BJ (cell line): ENCODE measurements at regions of chr16 and their contacts with region 1.

Region 1: GRCh38 chr16:84726079-84726668 is 26.4 kb downstream of the USP10 start:
- DNase-seq: no peak
- H3K4me3 ChIP-seq: no peak overlapping the region
- H3K27me3 ChIP-seq: no peaks in the 10 kb centered on the region
- CTCF ChIP-seq: peak; percentile 92

Region 2: GRCh38 chr16:84511180-84511824 is 214.9 kb before region 1 on chr16:
- CTCF ChIA-PET with region 1: interaction called, 16 read pairs
- POLR2A ChIA-PET with region 1: no interaction called
- DNase-seq: peak; percentile 46
- H3K4me3 ChIP-seq: no peak overlapping the region
- H3K27me3 ChIP-seq: no peaks in the 10 kb centered on the region
- CTCF ChIP-seq: peak; percentile 89

Region 3: DNA sequence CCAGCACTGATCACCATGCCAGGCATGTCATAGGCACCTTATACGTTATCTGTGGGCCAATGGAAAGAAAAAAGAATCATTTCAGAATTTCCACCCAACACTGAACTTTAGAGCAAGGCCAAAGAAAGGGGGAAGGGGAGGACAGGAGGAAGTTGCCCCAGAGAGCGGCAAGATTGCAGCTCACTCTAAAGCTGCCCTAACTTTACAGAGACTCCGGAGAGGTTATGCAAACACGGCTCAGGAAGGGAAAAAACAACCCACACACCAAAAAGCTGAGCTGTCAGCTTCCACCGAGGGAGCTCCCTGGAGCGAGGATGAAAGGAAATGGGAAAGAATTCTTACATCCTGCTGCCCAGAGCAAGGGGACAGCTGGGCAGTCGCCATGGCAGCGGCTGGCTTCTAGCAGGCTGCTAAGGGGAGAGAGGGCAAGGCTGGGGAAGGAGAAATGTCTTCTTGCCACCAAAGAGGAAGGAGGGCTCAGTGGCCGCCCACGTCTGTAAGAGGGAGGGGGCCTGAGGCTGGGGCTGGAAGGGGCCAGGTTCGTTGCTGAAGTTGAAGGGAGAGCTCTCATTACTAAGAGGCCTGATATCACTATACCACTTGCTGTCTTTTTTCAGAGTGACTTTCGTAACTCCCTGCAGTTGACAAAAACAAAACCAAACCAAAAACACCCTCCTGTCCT is 126.5 kb before region 1 on chr16:
- CTCF ChIA-PET with region 1: no interaction called
- POLR2A ChIA-PET with region 1: no interaction called
- DNase-seq: no peak
- H3K4me3 ChIP-seq: peak overlapping the region; percentile 5; the same call in 1 of the 2 replicates
- H3K27me3 ChIP-seq: no peaks in the 10 kb centered on the region
- CTCF ChIP-seq: no peak

Region 4: GRCh38 chr16:84633622-84634021 is 92.6 kb before region 1 on chr16:
- CTCF ChIA-PET with region 1: interaction called, 15 read pairs
- POLR2A ChIA-PET with region 1: no interaction called
- DNase-seq: no peak
- H3K4me3 ChIP-seq: no peak overlapping the region
- H3K27me3 ChIP-seq: no peaks in the 10 kb centered on the region
- CTCF ChIP-seq: no peak

Region 5: DNA sequence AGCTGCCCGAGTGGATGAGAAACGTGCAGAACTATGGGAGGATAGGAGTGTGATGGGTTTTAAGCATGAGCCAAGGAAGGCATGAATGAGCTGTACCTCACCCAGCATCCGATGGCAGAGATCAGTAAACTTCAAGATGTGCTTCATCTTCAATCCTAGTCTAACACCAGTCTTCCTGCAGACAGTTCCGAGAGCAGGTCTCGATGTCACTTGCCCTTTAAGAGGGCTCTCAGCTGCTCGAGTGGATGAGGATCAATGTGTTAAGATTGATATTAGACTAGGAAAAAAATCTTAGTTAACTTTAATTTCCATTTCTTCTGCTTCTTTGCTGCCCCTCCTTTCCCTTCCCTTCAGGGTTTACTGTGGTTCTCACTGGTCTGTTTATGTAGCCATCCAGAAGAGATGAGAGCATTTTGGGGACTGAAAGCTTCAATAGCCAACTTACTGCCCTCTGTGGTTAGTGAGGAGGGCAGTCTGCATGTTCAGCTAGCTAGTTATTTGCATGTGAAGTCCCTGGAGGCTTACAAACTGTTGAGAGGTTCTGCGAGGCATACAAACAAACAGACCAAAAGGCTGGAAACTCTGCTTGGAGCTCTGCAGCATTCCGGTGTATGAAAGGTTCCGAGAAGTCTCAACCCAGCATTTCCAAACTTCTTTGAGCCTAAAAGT is 62.6 kb before region 1 on chr16:
- CTCF ChIA-PET with region 1: interaction called, 29 read pairs
- POLR2A ChIA-PET with region 1: no interaction called
- DNase-seq: no peak
- H3K4me3 ChIP-seq: no peak overlapping the region
- H3K27me3 ChIP-seq: no peaks in the 10 kb centered on the region
- CTCF ChIP-seq: no peak

Region 6: GRCh38 chr16:84687715-84688114 is 38.5 kb before region 1 on chr16:
- CTCF ChIA-PET with region 1: interaction called, 10 read pairs
- POLR2A ChIA-PET with region 1: no interaction called
- DNase-seq: peak; percentile 59
- H3K4me3 ChIP-seq: no peak overlapping the region
- H3K27me3 ChIP-seq: no peaks in the 10 kb centered on the region
- CTCF ChIP-seq: no peak

Region 7: GRCh38 chr16:84738255-84739038 is 12.3 kb after region 1 on chr16:
- CTCF ChIA-PET with region 1: interaction called, 37 read pairs
- POLR2A ChIA-PET with region 1: no interaction called
- DNase-seq: no peak
- H3K4me3 ChIP-seq: no peak overlapping the region
- H3K27me3 ChIP-seq: no peaks in the 10 kb centered on the region
- CTCF ChIP-seq: peak; percentile 87